Calu3 (cell line): ENCODE measurements at regions of chr14 and their contacts with region 1.

Region 1: GRCh38 chr14:61553725-61554641 is 141.3 kb upstream of the HIF1A start:
- DNase-seq: peak; percentile 74
- H3K4me3 Mint-ChIP-seq: peak overlapping the region; percentile 45
- H3K27ac Mint-ChIP-seq: peak overlapping the region; percentile 92
- H3K4me1 Mint-ChIP-seq: peaks cover 54% of the 10 kb centered on the region
- H3K27me3 Mint-ChIP-seq: no peaks in the 10 kb centered on the region
- CTCF ChIP-seq: no peak

Region 2: DNA sequence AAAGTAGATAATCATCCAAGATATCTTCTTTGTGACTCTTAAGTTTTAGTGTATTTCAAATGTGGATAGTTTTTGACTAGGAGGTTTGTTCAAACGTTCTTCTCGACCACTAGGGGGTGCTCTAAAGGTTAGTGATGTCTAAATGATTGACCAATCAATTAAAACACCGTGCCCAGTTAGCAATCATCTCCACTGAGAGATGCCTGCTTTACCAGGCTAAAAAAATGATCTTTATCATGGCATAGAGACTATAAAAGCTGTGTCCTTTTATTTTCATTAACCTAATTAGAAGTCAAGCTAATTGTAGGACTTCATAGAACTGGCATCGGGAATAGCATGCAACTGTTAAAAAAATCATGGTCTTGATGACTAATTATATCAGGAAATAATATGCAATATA is 78.7 kb before region 1 on chr14:
- CTCF ChIA-PET with region 1: interaction called, 16 read pairs
- intact Hi-C with region 1: loop called (anchors 2 kb)
- DNase-seq: peak; percentile 41
- H3K4me3 Mint-ChIP-seq: no peak overlapping the region
- H3K27ac Mint-ChIP-seq: peak overlapping the region; percentile 61
- H3K4me1 Mint-ChIP-seq: peaks cover 86% of the 10 kb centered on the region
- H3K27me3 Mint-ChIP-seq: no peaks in the 10 kb centered on the region
- CTCF ChIP-seq: peak; percentile 70

Region 3: DNA sequence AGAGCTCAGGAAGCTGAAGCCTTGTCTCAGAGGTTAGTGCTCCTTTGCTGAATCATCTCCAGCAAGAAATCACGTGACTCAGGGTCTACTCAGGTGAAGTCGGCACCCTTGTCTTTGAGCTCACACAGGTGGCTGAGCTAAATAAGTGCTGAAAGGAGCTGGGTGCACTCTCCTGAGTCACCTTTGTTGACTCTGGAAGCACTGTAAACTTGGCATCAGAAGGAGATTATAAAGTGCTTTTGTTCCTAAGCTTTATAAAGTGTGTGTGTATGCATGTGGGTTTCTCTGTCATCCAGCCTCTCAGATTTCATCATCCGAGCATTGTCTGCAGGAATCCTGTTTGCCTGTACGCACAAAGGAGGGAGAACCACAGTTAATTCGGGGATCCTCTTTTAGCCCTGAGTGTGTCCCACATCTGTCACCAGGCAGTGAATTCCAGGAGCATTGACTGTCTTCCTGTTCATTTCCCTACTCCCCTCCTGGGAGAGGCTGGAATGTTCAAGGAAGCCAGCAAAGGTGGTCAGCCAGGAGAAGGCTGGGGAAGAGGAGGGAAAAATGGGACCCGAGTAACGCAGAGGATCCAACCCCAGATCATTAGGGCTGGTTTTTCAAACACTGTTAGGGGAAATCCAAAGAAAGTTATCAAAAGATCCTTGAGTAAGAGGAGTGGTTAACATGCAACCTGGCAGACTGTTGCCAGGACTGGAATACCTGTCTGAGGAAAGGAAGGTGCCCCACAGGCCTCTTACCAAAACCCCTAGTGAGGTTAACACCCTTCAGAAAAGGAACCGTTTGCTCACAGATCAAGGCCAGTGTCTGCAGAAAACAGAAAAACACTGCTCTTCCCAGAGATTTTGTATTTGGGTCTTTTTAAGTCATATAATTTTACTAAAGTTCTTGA is 16.2 kb before region 1 on chr14:
- CTCF ChIA-PET with region 1: interaction called, 15 read pairs
- intact Hi-C with region 1: loop called (anchors 2 kb)
- DNase-seq: peak; percentile 76
- H3K4me3 Mint-ChIP-seq: peak overlapping the region; percentile 20
- H3K27ac Mint-ChIP-seq: peak overlapping the region; percentile 85
- H3K4me1 Mint-ChIP-seq: peaks cover 64% of the 10 kb centered on the region
- H3K27me3 Mint-ChIP-seq: no peaks in the 10 kb centered on the region
- CTCF ChIP-seq: no peak

Region 4: GRCh38 chr14:61899497-61899896 is 345.5 kb after region 1 on chr14:
- CTCF ChIA-PET with region 1: no interaction called
- intact Hi-C with region 1: no loop called
- DNase-seq: no peak
- H3K4me3 Mint-ChIP-seq: no peak overlapping the region
- H3K27ac Mint-ChIP-seq: no peak overlapping the region
- H3K4me1 Mint-ChIP-seq: no peaks in the 10 kb centered on the region
- H3K27me3 Mint-ChIP-seq: no peaks in the 10 kb centered on the region
- CTCF ChIP-seq: no peak